Panc1 (cell line): ENCODE measurements at regions of chr14 and their contacts with region 1.

Region 1: DNA sequence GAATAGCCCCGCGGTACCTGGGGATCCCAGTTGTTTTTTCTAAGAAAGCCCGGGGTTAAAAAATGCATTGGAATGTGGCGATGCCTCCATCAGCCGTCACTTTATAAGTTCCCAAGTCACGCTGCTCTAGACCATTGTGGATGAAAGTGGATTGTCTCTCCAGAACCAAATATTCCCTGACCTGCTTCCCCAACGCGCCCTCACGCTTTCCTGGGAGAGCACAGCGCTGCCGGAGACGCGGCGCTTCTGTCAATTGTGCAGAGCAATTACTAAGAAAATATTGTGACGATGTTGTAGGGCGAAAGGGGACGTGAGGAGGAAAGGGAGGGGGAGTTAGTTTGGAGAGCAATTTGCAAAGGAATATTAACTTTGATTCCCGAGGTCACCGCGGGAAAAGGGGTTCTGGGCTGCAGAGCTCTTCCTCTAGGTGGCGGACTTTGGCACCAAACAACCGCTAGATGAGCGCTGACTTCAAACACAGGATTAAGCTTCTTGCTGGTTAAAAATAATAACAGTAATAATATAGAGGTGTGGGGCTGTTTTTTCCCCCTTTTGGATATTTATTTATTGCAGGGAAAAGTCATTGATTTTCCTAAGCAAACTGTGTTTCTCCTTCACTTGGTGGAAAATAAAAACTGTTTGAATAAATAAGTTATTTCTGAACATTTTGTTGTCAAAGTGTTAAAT is 9.6 kb upstream of the FOXG1 start:
- DNase-seq: no peak
- ATAC-seq: peak; percentile 88
- H3K4me3 ChIP-seq: peak overlapping the region; percentile 19 to 45; a peak in 3 of 4 replicates
- H3K27ac ChIP-seq: no peak overlapping the region
- H3K4me1 ChIP-seq: no peaks in the 10 kb centered on the region
- H3K27me3 ChIP-seq: peaks cover 5% of the 10 kb centered on the region
- CTCF ChIP-seq: peak; percentile 83

Region 2: GRCh38 chr14:28780843-28781820 is 24.1 kb after region 1 on chr14:
- CTCF ChIA-PET with region 1: interaction called, 10 read pairs
- POLR2A ChIA-PET with region 1: no interaction called
- in situ Hi-C with region 1: no loop called
- intact Hi-C with region 1: no loop called
- DNase-seq: no peak
- ATAC-seq: no peak
- H3K4me3 ChIP-seq: no peak overlapping the region
- H3K27ac ChIP-seq: no peak overlapping the region
- H3K4me1 ChIP-seq: no peaks in the 10 kb centered on the region
- H3K27me3 ChIP-seq: peaks cover 2% of the 10 kb centered on the region; the same call in 1 of the 2 replicates
- CTCF ChIP-seq: no peak

Region 3: GRCh38 chr14:29222671-29223268 is 465.7 kb after region 1 on chr14:
- CTCF ChIA-PET with region 1: interaction called, 3 read pairs
- POLR2A ChIA-PET with region 1: no interaction called
- in situ Hi-C with region 1: no loop called
- intact Hi-C with region 1: loop called (anchors 5 kb)
- DNase-seq: peak; percentile 7
- ATAC-seq: no peak
- H3K4me3 ChIP-seq: no peak overlapping the region
- H3K27ac ChIP-seq: no peak overlapping the region
- H3K4me1 ChIP-seq: no peaks in the 10 kb centered on the region
- H3K27me3 ChIP-seq: no peaks in the 10 kb centered on the region
- CTCF ChIP-seq: peak; percentile 60